A549 (cell line): ENCODE measurements at regions of chr19 and their contacts with region 1.

Region 1: GRCh38 chr19:41682386-41682785 is 5.7 kb downstream of the CEACAM7 start:
- DNase-seq: no peak
- ATAC-seq: peak in 1 of 2 experiments; percentile 31; a peak in 2 of 6 replicates
- H3K4me3 ChIP-seq: no peak overlapping the region
- H3K27ac ChIP-seq: no peak overlapping the region
- H3K4me1 ChIP-seq: no peaks in the 10 kb centered on the region
- CTCF ChIP-seq: no peak
- EP300 ChIP-seq: no peak
- POLR2A ChIP-seq: no peak
- RAD21 ChIP-seq: no peak

Region 2: DNA sequence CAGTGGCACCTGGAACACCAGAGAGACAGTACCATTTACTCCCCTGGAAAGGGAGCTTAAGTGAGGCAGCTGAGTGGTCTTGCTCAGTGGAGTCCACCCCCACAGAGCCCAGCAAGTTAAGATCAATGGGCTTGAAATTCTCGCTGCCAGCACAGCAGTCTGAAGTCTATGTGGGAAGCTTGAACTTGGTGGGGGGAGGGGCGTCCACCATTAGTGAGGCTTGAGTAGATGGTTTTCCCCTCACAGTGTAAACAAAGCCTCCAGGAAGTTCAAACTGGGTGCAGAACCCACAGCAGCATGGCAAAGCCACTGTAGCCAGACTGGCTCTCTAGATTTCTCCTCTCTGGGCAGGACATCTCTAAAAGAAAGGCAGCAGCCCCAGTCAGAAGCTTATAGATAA is 25.2 kb before region 1 on chr19:
- CTCF ChIA-PET with region 1: interaction called, 11 read pairs
- POLR2A ChIA-PET with region 1: no interaction called
- DNase-seq: no peak
- ATAC-seq: no peak
- H3K4me3 ChIP-seq: no peak overlapping the region
- H3K27ac ChIP-seq: no peak overlapping the region
- H3K4me1 ChIP-seq: no peaks in the 10 kb centered on the region
- CTCF ChIP-seq: no peak
- EP300 ChIP-seq: no peak
- POLR2A ChIP-seq: no peak
- RAD21 ChIP-seq: no peak